ENCODE measurements at regions of chr3 and their contacts with region 1.

Region 1: GRCh38 chr3:38136777-38137614 is at the start of gene ACAA1:
- H3K4me3 ChIP-seq: peak within 1 kb of the TSS; percentile 83
- H3K27ac ChIP-seq: peak within 1 kb of the TSS; percentile 2; the same call in 1 of the 2 replicates
- H3K4me1 ChIP-seq: no peaks in the 10 kb centered on the region
- CTCF ChIP-seq: no peak

Region 2: GRCh38 chr3:37680401-37680800 is 456.6 kb before region 1 on chr3:
- CTCF ChIA-PET with region 1: no interaction called
- POLR2A ChIA-PET with region 1: no interaction called
- H3K4me3 ChIP-seq: no peak overlapping the region
- H3K27ac ChIP-seq: no peak overlapping the region
- H3K4me1 ChIP-seq: no peaks in the 10 kb centered on the region
- CTCF ChIP-seq: no peak

Region 3: GRCh38 chr3:38117748-38118420 is 19.1 kb before region 1 on chr3:
- CTCF ChIA-PET with region 1: no interaction called
- POLR2A ChIA-PET with region 1: interaction called, 11 read pairs
- H3K4me3 ChIP-seq: no peak overlapping the region
- H3K27ac ChIP-seq: no peak overlapping the region
- H3K4me1 ChIP-seq: no peaks in the 10 kb centered on the region
- CTCF ChIP-seq: peak; percentile 69

Region 4: GRCh38 chr3:38157595-38157994 is 20.6 kb after region 1 on chr3:
- CTCF ChIA-PET with region 1: no interaction called
- POLR2A ChIA-PET with region 1: interaction called, 48 read pairs
- H3K4me3 ChIP-seq: no peak overlapping the region
- H3K27ac ChIP-seq: no peak overlapping the region
- H3K4me1 ChIP-seq: peaks cover 4% of the 10 kb centered on the region; the same call in 1 of the 2 replicates
- CTCF ChIP-seq: no peak

Region 5: DNA sequence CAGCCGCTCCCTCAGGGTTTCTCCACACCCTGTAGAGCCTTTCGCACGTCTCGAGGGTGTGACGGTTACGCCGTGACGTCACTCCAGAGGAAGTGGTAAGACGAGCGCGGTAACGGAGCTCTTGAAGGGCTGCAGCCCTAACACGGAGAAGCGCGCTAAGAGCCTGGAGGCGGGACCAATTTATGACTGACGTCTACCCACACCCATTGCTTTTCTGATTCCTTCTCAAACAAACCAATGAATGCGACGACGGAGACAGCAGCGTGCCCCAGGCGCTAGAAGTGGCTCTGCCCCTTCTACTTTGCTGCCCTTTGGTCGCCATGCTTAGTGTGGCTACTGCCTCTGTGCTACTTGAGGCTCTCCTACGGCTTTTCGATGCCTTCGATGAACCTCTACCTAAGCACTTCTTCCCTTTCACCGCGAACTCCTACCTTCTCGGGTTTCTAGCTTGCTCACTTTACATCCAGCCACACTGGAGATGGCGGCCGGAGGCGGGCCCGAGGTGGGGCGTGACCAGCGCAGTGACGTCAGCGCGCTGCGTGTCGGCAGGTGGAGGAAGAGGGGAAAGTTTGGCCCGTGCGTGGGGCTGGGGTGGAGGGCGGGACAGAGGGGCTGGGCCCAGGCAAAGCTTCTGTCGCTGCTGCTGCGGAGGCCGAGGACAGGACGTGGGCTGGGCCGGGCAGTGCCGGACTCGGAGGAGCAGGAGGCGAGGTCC is 28.1 kb after region 1 on chr3 and contains the start of gene OXSR1:
- CTCF ChIA-PET with region 1: no interaction called
- POLR2A ChIA-PET with region 1: interaction called, 48 read pairs
- H3K4me3 ChIP-seq: peak within 1 kb of the TSS; percentile 80
- H3K27ac ChIP-seq: peak within 1 kb of the TSS; percentile 82
- H3K4me1 ChIP-seq: no peaks in the 10 kb centered on the region
- CTCF ChIP-seq: no peak

Measured in HEK293 (cell line).